HAP-1 (cell line): ENCODE measurements at regions of chr1 and their contacts with region 1.

Region 1: DNA sequence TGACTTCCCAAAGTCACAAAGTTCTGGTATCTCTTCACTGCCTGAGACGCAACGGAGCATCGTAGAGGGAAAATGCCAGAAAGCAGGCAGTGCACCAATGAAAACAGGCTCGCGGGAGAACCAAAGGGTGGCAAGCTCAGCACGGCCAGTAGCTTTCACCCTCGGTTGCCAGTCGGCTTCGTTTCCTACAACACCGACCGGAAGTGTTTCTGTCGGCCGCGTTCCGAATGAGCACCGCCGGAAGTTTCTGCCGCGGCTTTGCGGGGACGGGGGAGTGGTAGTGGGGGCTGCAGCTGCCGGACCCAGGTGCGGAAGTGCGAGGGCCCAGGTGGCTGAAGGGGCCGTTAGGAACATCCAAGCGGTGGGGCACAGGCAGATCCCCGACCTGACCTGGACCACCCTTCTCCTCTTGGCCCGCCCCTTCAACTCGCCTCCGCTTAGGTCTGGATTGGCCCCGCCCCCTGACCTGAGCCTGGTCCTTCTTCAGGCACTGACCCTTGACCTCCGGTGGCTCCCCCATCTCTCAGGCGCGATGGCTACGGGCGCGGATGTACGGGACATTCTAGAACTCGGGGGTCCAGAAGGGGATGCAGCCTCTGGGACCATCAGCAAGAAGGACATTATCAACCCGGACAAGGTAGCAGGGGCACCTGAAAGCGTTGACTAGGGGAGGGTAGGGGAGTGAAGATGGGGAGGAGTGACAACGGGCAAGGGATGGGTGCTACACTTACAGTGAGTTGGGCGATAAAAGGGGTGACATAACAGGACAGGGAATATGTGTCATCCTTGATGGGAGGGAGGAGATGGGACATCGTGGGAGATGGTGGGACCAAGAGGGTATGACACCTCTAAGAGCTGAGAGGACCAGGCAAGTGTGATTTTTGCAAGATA is at the start of gene DMAP1:
- DNase-seq: peak; percentile 66 to 86
- H3K4me3 ChIP-seq: peak within 1 kb of the TSS; percentile 97
- H3K4me1 ChIP-seq: peaks cover 4% of the 10 kb centered on the region; the same call in 1 of the 2 replicates
- H3K27me3 ChIP-seq: no peaks in the 10 kb centered on the region

Region 2: DNA sequence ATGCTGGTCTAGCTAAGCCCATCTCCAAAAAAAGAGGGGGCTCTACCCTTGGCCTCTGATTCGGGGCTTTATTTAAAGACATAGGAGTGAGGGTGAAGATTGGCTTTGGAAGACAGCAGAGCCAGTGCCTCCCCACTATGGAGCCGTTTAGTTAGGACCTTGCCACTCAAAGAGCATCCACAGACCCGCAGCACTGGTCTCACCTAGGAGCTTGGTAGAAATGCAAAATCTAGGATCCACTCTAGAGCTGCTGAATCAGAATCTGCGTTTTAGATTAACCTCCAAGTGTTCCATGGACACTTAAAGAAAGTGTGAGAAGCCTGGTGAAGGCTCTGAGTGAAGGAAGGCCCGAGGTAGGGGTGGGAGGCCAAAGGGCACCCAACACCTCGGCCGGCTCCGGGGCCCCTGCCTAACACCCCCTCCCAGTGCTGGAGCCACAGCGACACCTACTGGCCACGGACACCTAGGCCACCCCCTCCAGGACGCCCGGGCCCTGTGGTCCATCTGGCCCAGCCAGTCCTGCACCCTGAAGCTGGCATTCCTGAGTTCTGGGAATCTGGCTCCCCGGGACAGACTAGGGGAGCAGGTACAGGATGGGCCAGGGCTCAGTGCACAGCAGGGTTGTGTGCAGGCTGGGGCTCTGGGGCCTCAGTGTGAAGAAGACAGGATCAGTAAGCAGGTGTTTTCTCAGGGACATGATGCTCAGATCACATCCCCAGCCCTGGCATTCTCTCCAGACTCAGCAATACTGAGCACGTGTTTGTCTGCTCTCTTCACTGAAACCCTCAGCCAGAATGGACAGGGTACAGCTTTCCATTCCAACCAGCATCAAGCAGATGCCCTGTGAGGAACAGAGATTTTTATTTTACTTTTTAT is 381.6 kb after region 1 on chr1:
- in situ Hi-C with region 1: loop called (anchors 5 kb)
- DNase-seq: peak; percentile 43 to 93
- H3K4me3 ChIP-seq: no peak overlapping the region
- H3K4me1 ChIP-seq: peaks cover 3% of the 10 kb centered on the region; the same call in 1 of the 2 replicates
- H3K27me3 ChIP-seq: no peaks in the 10 kb centered on the region

Region 3: DNA sequence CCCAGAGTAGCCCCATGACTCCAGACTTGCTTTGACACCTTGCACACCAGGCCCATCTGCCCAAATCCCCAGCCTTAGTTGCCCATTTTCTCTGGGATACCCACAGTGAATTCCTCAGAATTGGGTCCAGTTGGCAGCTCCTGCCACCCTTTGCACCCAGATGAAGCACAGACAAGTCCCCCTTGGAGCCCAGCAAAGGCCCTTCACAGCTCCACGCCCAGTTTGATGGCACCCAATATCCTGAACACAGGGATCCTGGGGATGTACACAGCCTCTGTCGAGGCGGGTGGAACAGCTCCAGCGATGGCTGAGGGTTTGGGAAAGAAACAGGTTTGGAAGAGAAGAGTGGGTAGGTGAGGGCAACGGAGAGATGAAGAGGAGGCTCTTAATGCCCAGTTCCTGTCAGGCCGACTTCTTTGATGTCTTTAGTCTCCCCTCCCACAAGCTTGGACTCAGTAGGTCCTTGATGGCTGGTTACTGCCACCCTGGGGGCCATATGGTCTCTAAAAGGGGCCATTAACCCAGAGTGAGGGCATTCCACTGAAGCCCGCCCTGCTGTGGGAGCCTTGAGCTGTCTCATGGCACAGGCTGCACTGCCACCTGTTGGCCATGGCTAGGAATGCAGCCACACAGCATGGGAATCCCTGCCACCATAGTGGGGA is 439.1 kb after region 1 on chr1:
- in situ Hi-C with region 1: loop called (anchors 10 kb)
- DNase-seq: peak; percentile 56 to 86
- H3K4me3 ChIP-seq: no peak overlapping the region
- H3K4me1 ChIP-seq: no peaks in the 10 kb centered on the region
- H3K27me3 ChIP-seq: no peaks in the 10 kb centered on the region